Heart right ventricle (tissue), 16 donors: ENCODE measurements at regions of chr7 and their contacts with region 1.

Region 1: GRCh38 chr7:93910076-93910994 is 4.0 kb downstream of the GNGT1 start:
- DNase-seq: peak in 1 of 2 donors; percentile 43
- ATAC-seq: peak in 7 of 8 donors; percentile 57 to 79 (median 71)
- H3K4me3 ChIP-seq: no peak overlapping the region
- H3K27ac ChIP-seq: peak overlapping the region in 7 of 10 donors; percentile 20 to 68 (median 37)
- H3K4me1 ChIP-seq: peaks cover 0 to 39% (median 17%) of the 10 kb centered on the region in 9 donors
- H3K27me3 ChIP-seq: no peaks in the 10 kb centered on the region
- CTCF ChIP-seq: no peak

Region 2: DNA sequence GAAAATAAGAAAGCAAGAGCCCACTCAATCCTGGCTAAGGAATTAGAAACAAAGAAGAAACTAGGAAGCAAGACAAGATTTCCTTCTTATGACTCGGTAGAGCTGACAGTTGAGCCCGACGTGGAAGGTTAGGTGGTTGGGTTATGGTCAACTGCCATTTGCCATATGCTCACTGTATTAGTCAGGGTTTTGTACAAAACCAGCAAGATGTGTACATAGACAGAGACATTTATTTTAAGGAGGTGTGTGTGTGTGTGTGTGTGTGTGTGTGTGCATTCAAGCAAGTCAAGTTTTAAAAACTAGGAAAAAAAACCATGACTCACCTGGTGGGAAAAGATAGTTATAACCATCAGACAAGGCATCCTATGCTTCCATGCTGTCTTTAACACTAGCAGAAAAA is 519.7 kb before region 1 on chr7:
- intact Hi-C with region 1: no loop called
- DNase-seq: no peak
- ATAC-seq: no peak
- H3K4me3 ChIP-seq: no peak overlapping the region
- H3K27ac ChIP-seq: no peak overlapping the region
- H3K4me1 ChIP-seq: no peaks in the 10 kb centered on the region
- H3K27me3 ChIP-seq: peaks cover 0 to 7% (median 0%) of the 10 kb centered on the region in 7 donors
- CTCF ChIP-seq: no peak

Region 3: DNA sequence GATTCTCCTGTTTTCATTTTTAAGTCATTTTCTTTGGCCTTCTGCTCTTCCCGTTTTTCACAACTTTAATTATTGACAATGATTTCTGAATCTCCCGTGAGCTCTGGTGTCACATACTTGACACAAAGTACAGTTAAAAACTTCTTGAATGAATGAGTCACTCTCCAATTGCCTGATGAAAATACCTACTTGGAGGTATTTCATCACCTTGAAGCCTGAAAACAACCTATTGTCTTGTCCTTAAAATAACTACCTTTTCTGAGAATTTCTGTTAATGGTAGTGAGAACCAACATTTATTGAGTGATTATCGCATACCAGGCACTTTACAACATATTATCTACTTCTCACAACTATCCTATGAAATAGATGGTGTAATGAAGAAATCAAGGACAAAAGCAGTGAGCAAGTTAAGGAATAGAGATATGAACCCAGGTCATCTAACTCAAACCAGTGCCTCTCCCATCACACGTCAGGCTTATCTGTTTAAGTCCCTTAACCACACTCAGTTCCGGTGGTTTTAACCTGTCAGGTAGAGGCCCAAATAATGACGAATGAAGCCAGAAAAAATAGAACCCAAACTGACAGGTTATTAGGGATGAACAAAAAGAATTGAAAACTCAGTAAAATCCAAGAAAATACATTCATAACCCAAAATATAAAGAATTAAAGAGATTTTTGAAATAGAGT is 82.2 kb after region 1 on chr7:
- intact Hi-C with region 1: no loop called
- DNase-seq: no peak
- ATAC-seq: no peak
- H3K4me3 ChIP-seq: no peak overlapping the region
- H3K27ac ChIP-seq: no peak overlapping the region
- H3K4me1 ChIP-seq: peaks cover 0 to 4% (median 0%) of the 10 kb centered on the region in 9 donors
- H3K27me3 ChIP-seq: no peaks in the 10 kb centered on the region
- CTCF ChIP-seq: no peak

Region 4: GRCh38 chr7:94016786-94017185 is 106.5 kb after region 1 on chr7:
- intact Hi-C with region 1: no loop called
- DNase-seq: no peak
- ATAC-seq: no peak
- H3K4me3 ChIP-seq: no peak overlapping the region
- H3K27ac ChIP-seq: no peak overlapping the region
- H3K4me1 ChIP-seq: no peaks in the 10 kb centered on the region
- H3K27me3 ChIP-seq: no peaks in the 10 kb centered on the region
- CTCF ChIP-seq: no peak

Region 5: GRCh38 chr7:94170836-94171235 is 260.5 kb after region 1 on chr7:
- intact Hi-C with region 1: loop called in 1 of 10 experiments (anchors 10 kb)
- DNase-seq: no peak
- ATAC-seq: no peak
- H3K4me3 ChIP-seq: no peak overlapping the region
- H3K27ac ChIP-seq: peak overlapping the region in 2 of 10 donors; percentile 12 to 17
- H3K4me1 ChIP-seq: peaks cover 0 to 34% (median 5%) of the 10 kb centered on the region in 9 donors
- H3K27me3 ChIP-seq: no peaks in the 10 kb centered on the region
- CTCF ChIP-seq: no peak